ENCODE measurements at regions of chr16 and their contacts with region 1.

Region 1: GRCh38 chr16:82061861-82062525 is 26.9 kb downstream of the HSD17B2 start:
- DNase-seq: peak; percentile 22
- ATAC-seq: no peak; the same call in 1 of the 2 replicates
- H3K4me3 ChIP-seq: no peak overlapping the region
- H3K27ac ChIP-seq: peak overlapping the region; percentile 82; the same call in 1 of the 2 replicates
- H3K4me1 ChIP-seq: peaks cover 8% of the 10 kb centered on the region
- H3K27me3 ChIP-seq: no peaks in the 10 kb centered on the region
- CTCF ChIP-seq: peak; percentile 34
- POLR2A ChIP-seq: no peak
- RAD21 ChIP-seq: 0 out of 2 replicates have a peak, but pooled peaks have one; percentile 2

Region 2: GRCh38 chr16:80875616-80876015 is 1186.4 kb before region 1 on chr16:
- CTCF ChIA-PET with region 1: no interaction called
- POLR2A ChIA-PET with region 1: no interaction called
- dilution Hi-C with region 1: no loop called
- in situ Hi-C with region 1: no loop called
- intact Hi-C with region 1: no loop called
- DNase-seq: no peak
- ATAC-seq: no peak
- H3K4me3 ChIP-seq: peak overlapping the region; percentile 4; the same call in 1 of the 2 replicates
- H3K27ac ChIP-seq: no peak overlapping the region
- H3K4me1 ChIP-seq: no peaks in the 10 kb centered on the region
- H3K27me3 ChIP-seq: no peaks in the 10 kb centered on the region
- CTCF ChIP-seq: no peak
- POLR2A ChIP-seq: no peak
- RAD21 ChIP-seq: no peak

Region 3: DNA sequence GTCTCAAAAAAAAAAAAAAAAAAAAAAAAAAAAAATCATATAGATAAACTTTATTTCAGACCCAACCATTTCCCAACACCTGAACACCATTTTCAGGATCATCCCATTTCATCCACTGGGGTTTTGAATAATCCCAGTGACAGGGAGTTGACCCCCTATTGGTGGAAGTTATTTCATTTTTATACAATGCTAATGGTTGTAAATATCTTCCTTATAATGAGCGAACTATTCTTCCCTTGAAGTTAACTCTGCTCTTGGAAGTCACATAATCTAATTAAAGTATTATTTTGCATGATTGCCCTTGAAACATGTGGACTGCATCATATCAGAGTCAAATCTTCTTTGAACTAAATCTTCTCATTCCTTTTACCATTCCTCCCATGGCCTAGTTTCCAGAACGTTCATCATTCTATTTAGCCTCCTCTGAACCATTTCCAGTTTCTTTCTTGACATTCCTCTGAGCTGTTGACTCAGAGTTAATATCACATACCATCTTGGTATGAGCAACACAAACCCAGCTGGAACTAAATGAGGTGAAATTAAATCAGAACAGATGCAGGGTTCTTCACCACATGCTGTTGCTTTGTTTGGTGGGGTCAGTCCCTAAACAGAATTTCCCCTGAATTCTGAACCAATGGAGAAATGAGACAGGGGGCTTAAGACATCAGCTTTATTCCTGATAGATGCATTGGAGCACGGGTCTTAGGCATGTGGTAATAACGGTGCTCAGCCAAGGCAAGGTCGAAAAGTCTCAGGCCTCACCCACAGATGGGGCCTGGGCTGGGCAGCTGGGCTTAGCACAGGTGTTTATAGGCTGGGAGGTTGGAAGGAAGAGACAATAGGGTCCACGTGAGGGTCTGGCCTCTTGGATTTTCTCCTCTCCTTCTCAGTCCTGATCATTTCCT is 18.1 kb before region 1 on chr16:
- CTCF ChIA-PET with region 1: interaction called, 3 read pairs
- POLR2A ChIA-PET with region 1: no interaction called
- dilution Hi-C with region 1: no loop called
- in situ Hi-C with region 1: no loop called
- intact Hi-C with region 1: loop called (anchors 2 kb)
- DNase-seq: peak; percentile 75
- ATAC-seq: peak; percentile 89
- H3K4me3 ChIP-seq: no peak overlapping the region
- H3K27ac ChIP-seq: peak overlapping the region; percentile 98
- H3K4me1 ChIP-seq: peaks cover 14% of the 10 kb centered on the region
- H3K27me3 ChIP-seq: no peaks in the 10 kb centered on the region; the same call in 1 of the 2 replicates
- CTCF ChIP-seq: no peak
- POLR2A ChIP-seq: no peak
- RAD21 ChIP-seq: no peak

Region 4: DNA sequence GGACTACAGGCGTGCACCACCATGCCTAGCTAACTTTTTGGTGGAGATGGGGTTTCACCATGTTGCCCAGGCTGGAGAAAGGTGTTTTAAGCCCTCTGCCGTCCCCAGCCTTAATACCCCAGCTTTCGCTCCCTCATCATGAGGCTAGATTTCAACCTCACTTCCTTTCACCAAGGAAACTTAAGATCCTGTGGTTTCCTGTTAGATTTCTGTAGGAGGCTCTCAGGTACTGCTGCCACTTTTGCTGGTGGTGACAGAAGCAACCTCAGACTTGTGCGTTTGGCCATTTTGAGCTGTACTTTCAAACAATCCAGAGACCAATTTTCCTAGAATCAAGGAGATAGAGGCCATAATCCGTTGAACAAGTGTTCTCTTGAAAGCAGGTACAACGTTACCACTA is 71.8 kb after region 1 on chr16:
- CTCF ChIA-PET with region 1: no interaction called
- POLR2A ChIA-PET with region 1: no interaction called
- dilution Hi-C with region 1: no loop called
- in situ Hi-C with region 1: no loop called
- intact Hi-C with region 1: no loop called
- DNase-seq: no peak
- ATAC-seq: no peak
- H3K4me3 ChIP-seq: no peak overlapping the region
- H3K27ac ChIP-seq: no peak overlapping the region
- H3K4me1 ChIP-seq: peaks cover 1% of the 10 kb centered on the region; the same call in 1 of the 2 replicates
- H3K27me3 ChIP-seq: no peaks in the 10 kb centered on the region
- CTCF ChIP-seq: no peak
- POLR2A ChIP-seq: no peak
- RAD21 ChIP-seq: no peak